ENCODE measurements at regions of chr7 and their contacts with region 1.

Region 1: GRCh38 chr7:111089822-111090426 is 1.0 kb upstream of the LRRN3 start:
- DNase-seq: no peak
- H3K4me3 Mint-ChIP-seq: peak overlapping the region; percentile 93
- H3K27ac Mint-ChIP-seq: peak overlapping the region; percentile 23
- H3K4me1 Mint-ChIP-seq: peaks cover 52% of the 10 kb centered on the region
- H3K27me3 Mint-ChIP-seq: peaks cover 2% of the 10 kb centered on the region

Region 2: DNA sequence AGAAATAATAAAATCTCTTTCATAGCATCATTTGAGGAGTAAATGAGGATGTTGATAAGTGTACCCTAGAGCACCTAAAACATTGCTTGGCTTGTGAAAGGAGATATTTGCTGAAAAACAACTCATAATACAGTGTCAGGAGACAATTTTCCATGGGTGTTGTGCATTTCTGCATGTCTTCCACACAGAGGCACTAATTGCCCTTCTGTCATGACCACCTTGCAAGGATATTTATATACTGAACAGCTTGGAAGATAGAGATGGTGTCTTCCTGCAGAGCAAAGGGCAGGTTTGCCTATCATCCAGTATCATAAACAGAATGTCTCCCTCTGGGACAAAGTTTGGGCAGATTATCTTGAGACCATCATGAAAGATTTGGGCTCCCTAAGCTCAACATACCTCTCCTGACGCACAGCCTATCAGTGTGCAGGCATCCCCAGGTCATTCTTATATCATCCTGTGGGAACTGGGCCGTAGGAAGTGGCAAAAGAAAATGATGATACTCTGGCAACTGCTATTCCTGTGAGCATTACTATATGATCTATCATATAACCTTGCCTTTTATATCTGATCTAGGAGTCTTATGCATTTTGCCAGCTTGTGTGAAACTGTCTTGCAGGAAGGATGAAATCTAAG is 494.1 kb before region 1 on chr7:
- intact Hi-C with region 1: loop called (anchors 2 kb)
- DNase-seq: peak; percentile 62
- H3K4me3 Mint-ChIP-seq: no peak overlapping the region
- H3K27ac Mint-ChIP-seq: no peak overlapping the region
- H3K4me1 Mint-ChIP-seq: peaks cover 9% of the 10 kb centered on the region
- H3K27me3 Mint-ChIP-seq: peaks cover 3% of the 10 kb centered on the region

Region 3: DNA sequence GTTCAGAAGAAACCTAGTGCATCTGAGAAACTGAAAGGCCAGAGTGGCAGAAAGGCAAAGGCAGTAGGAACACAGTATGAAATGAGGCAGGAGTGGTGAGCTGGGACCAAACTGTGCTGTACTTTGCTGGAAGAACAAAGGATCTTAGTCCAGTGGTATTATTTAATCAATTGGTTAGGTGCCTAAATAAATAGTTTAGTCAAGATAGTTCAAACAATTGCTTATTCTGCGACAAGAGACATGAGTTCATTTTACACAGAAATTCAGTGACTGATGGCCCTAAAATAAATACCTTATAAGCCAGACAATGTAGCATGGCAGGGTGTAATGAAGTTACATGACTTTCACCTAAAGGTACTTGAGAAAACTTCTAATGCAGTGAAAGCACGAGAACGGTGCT is 180.8 kb before region 1 on chr7:
- intact Hi-C with region 1: loop called (anchors 5 kb)
- DNase-seq: no peak
- H3K4me3 Mint-ChIP-seq: no peak overlapping the region
- H3K27ac Mint-ChIP-seq: no peak overlapping the region
- H3K4me1 Mint-ChIP-seq: peaks cover 29% of the 10 kb centered on the region
- H3K27me3 Mint-ChIP-seq: no peaks in the 10 kb centered on the region

Region 4: GRCh38 chr7:111012799-111013675 is 76.9 kb before region 1 on chr7:
- intact Hi-C with region 1: loop called (anchors 1 kb)
- DNase-seq: peak; percentile 88
- H3K4me3 Mint-ChIP-seq: peak overlapping the region; percentile 83
- H3K27ac Mint-ChIP-seq: peak overlapping the region; percentile 90
- H3K4me1 Mint-ChIP-seq: peaks cover 66% of the 10 kb centered on the region
- H3K27me3 Mint-ChIP-seq: no peaks in the 10 kb centered on the region

Region 5: GRCh38 chr7:111113263-111114017 is 23.5 kb after region 1 on chr7:
- intact Hi-C with region 1: loop called (anchors 1 kb)
- DNase-seq: no peak
- H3K4me3 Mint-ChIP-seq: peak overlapping the region; percentile 37
- H3K27ac Mint-ChIP-seq: peak overlapping the region; percentile 70
- H3K4me1 Mint-ChIP-seq: peaks cover 49% of the 10 kb centered on the region
- H3K27me3 Mint-ChIP-seq: no peaks in the 10 kb centered on the region

Region 6: GRCh38 chr7:111232249-111233084 is 142.5 kb after region 1 on chr7:
- intact Hi-C with region 1: loop called (anchors 5 kb)
- DNase-seq: no peak
- H3K4me3 Mint-ChIP-seq: no peak overlapping the region
- H3K27ac Mint-ChIP-seq: no peak overlapping the region
- H3K4me1 Mint-ChIP-seq: peaks cover 11% of the 10 kb centered on the region
- H3K27me3 Mint-ChIP-seq: no peaks in the 10 kb centered on the region

Region 7: GRCh38 chr7:111561885-111562732 is 472.2 kb after region 1 on chr7 and contains the start of gene IMMP2L:
- intact Hi-C with region 1: loop called (anchors 2 kb)
- DNase-seq: peak; percentile 98
- H3K4me3 Mint-ChIP-seq: peak within 1 kb of the TSS; percentile 92
- H3K27ac Mint-ChIP-seq: peak within 1 kb of the TSS; percentile 91
- H3K4me1 Mint-ChIP-seq: peaks cover 32% of the 10 kb centered on the region
- H3K27me3 Mint-ChIP-seq: peaks cover 9% of the 10 kb centered on the region
- total RNA-seq, gene IMMP2L: 13.8 and 16.7 TPM in 2 replicates